Activated CD4-positive, alpha-beta T cell treated with anti-CD3 and anti-CD28 coated beads for 36 hours (primary cell): ENCODE measurements at regions of chr2 and their contacts with region 1.

Region 1: GRCh38 chr2:96638144-96639121 is at the start of gene KANSL3:
- DNase-seq: peak; percentile 94
- ATAC-seq: peak; percentile 86
- H3K4me3 Mint-ChIP-seq: peak within 1 kb of the TSS; percentile 91
- H3K27ac Mint-ChIP-seq: peak within 1 kb of the TSS; percentile 93
- H3K4me1 Mint-ChIP-seq: peaks cover 30% of the 10 kb centered on the region
- H3K27me3 Mint-ChIP-seq: no peaks in the 10 kb centered on the region
- total RNA-seq, gene KANSL3: 33.9 to 39.1 TPM

Region 2: DNA sequence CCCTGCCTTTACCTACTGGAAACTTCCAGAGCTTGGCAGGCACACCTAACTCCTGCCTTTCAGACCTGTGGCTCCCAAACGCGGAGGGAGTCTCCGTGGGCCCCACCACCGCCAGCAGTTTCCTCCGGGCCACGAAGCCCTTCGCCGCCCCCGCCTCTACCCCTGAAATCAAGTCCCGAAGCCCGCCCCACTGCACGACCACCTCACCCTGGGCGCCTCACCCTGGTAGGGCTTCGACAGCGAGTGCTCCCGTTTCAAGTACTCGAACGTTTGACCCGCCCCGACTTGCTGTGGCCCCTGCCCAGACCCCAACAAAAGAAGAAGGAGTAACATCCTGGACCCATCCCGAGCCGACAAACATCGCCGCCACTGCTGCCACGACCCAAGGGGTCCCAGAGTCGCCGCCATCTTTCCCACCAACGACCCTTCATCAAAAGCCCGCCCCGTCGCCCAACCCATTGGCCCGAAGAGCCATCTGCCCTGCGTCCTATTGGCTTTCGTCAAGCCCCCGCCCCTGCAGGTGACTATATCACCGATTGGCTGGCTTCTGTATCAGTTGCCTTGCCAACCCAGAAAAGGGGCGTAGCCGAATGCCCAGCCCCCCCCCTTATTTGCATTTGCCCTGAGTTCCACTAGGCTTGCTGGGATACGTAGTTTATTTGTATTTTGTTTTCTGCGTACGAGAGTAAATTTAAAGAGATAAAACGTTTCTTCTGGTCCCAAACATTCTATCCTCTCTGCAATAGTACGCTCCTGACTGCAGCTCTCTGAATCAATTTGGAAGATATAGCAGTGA is 101.4 kb after region 1 on chr2 and contains the start of gene LMAN2L:
- CTCF ChIA-PET with region 1: no interaction called
- POLR2A ChIA-PET with region 1: interaction called, 3 read pairs
- intact Hi-C with region 1: loop called (anchors 1 kb)
- DNase-seq: peak; percentile 98
- ATAC-seq: peak; percentile 100
- H3K4me3 Mint-ChIP-seq: peak within 1 kb of the TSS; percentile 98
- H3K27ac Mint-ChIP-seq: peak within 1 kb of the TSS; percentile 84
- H3K4me1 Mint-ChIP-seq: peaks cover 40% of the 10 kb centered on the region
- H3K27me3 Mint-ChIP-seq: no peaks in the 10 kb centered on the region
- total RNA-seq, gene LMAN2L: 4.8 to 5.7 TPM

Region 3: GRCh38 chr2:96960153-96960961 is 321.9 kb after region 1 on chr2:
- CTCF ChIA-PET with region 1: no interaction called
- POLR2A ChIA-PET with region 1: no interaction called
- intact Hi-C with region 1: loop called in 1 of 2 experiments (anchors 1 kb)
- DNase-seq: peak; percentile 93
- ATAC-seq: peak; percentile 78
- H3K4me3 Mint-ChIP-seq: no peak overlapping the region
- H3K27ac Mint-ChIP-seq: no peak overlapping the region
- H3K4me1 Mint-ChIP-seq: peaks cover 50% of the 10 kb centered on the region
- H3K27me3 Mint-ChIP-seq: no peaks in the 10 kb centered on the region